MCF 10A (cell line): ENCODE measurements at regions of chr15 and their contacts with region 1.

Region 1: GRCh38 chr15:34358367-34358766 is 8.6 kb downstream of the LPCAT4 start:
- DNase-seq: no peak
- H3K4me3 Mint-ChIP-seq: no peak overlapping the region
- H3K27ac Mint-ChIP-seq: no peak overlapping the region
- H3K4me1 Mint-ChIP-seq: peaks cover 13% of the 10 kb centered on the region
- H3K27me3 Mint-ChIP-seq: no peaks in the 10 kb centered on the region
- CTCF ChIP-seq: peak; percentile 17

Region 2: GRCh38 chr15:34342737-34343575 is 15.4 kb before region 1 on chr15 and contains the starts of genes NOP10 and NUTM1:
- CTCF ChIA-PET with region 1: interaction called, 19 read pairs
- POLR2A ChIA-PET with region 1: interaction called, 8 read pairs
- intact Hi-C with region 1: no loop called
- DNase-seq: peak; percentile 91
- H3K4me3 Mint-ChIP-seq: no peak within 1 kb of the TSS
- H3K27ac Mint-ChIP-seq: no peak within 1 kb of the TSS
- H3K4me1 Mint-ChIP-seq: peaks cover 5% of the 10 kb centered on the region
- H3K27me3 Mint-ChIP-seq: peaks cover 2% of the 10 kb centered on the region
- CTCF ChIP-seq: peak; percentile 91
- total RNA-seq, gene NOP10: 168 and 187 TPM in 2 replicates
- total RNA-seq, gene NUTM1: not detected in 2 replicates